ENCODE measurements at regions of chr21 and their contacts with region 1.

Region 1: GRCh38 chr21:36596218-36596617 is 102.7 kb upstream of the SIM2 start:
- DNase-seq: no peak
- CTCF ChIP-seq: no peak

Region 2: GRCh38 chr21:36584940-36585542 is 11.2 kb before region 1 on chr21:
- CTCF ChIA-PET with region 1: interaction called, 16 read pairs
- POLR2A ChIA-PET with region 1: no interaction called
- DNase-seq: no peak
- CTCF ChIP-seq: peak; percentile 17

Region 3: GRCh38 chr21:36727866-36728265 is 131.6 kb after region 1 on chr21:
- CTCF ChIA-PET with region 1: no interaction called
- POLR2A ChIA-PET with region 1: no interaction called
- DNase-seq: no peak
- CTCF ChIP-seq: no peak

Measured in GM10248 (cell line).